Adrenal gland (tissue), 19 donors: ENCODE measurements at regions of chr7 and their contacts with region 1.

Region 1: GRCh38 chr7:30564243-30564892 is 30.3 kb upstream of the GARS1 start:
- DNase-seq: peak; percentile 78 to 95 (median 84)
- H3K4me3 ChIP-seq: no peak overlapping the region
- H3K27ac ChIP-seq: no peak overlapping the region
- H3K4me1 ChIP-seq: peaks cover 0 to 12% of the 10 kb centered on the region in 2 donors
- H3K27me3 ChIP-seq: no peaks in the 10 kb centered on the region
- CTCF ChIP-seq: peak; percentile 73 to 97 (median 90)
- POLR2A ChIP-seq: no peak

Region 2: DNA sequence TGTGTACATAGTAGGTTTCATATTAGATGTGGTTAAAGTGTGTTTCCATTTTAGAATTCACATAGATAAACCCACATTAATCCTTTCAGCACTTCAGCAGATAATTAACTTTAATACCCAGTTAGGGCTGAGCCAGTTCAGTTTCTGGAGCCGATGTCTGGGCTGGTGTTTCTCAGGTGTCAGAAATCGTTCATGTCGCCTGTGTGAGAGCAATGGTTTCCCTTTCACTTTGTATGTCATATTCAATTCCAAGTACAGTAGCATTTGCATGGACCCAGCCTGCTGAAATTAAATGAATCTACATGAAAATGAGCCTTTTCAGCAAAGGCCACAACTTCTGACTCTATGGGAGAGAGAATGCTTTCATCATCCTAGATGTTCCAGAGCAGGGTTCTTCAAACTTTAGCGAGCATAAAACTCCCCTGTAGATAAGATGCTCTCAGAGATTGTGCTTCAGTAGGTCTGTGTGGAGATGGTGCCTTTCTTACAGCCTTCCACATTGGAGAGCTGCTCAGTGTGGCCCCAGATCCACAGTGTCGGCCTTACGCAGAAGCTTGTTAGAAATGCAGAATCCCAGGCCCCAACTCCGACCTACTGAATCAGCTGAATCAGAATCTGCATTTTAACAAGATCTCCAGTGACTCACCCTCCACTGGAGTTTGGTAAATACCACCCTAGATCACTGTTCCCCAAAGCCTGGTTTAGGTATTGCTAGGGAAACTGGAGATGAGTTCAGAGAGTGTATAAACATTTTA is 738.4 kb before region 1 on chr7:
- intact Hi-C with region 1: no loop called
- DNase-seq: no peak
- H3K4me3 ChIP-seq: no peak overlapping the region
- H3K27ac ChIP-seq: no peak overlapping the region
- H3K4me1 ChIP-seq: no peaks in the 10 kb centered on the region
- H3K27me3 ChIP-seq: no peaks in the 10 kb centered on the region
- CTCF ChIP-seq: no peak
- POLR2A ChIP-seq: no peak

Region 3: GRCh38 chr7:30276203-30276900 is 288.0 kb before region 1 on chr7:
- intact Hi-C with region 1: loop called in 1 of 2 experiments (anchors 10 kb)
- DNase-seq: peak; percentile 40 to 69 (median 49)
- H3K4me3 ChIP-seq: no peak overlapping the region
- H3K27ac ChIP-seq: no peak overlapping the region
- H3K4me1 ChIP-seq: no peaks in the 10 kb centered on the region
- H3K27me3 ChIP-seq: no peaks in the 10 kb centered on the region
- CTCF ChIP-seq: peak; percentile 29 to 70 (median 60)
- POLR2A ChIP-seq: no peak

Region 4: GRCh38 chr7:30504347-30505173 is 59.8 kb before region 1 on chr7 and contains the start of gene GGCT:
- intact Hi-C with region 1: loop called in 1 of 2 experiments (anchors 5 kb)
- DNase-seq: peak; percentile 98 to 100 (median 99)
- H3K4me3 ChIP-seq: peak within 1 kb of the TSS; percentile 94 to 99 (median 96)
- H3K27ac ChIP-seq: peak within 1 kb of the TSS; percentile 55 to 90 (median 70)
- H3K4me1 ChIP-seq: peaks cover 0 to 36% of the 10 kb centered on the region in 2 donors
- H3K27me3 ChIP-seq: no peaks in the 10 kb centered on the region
- CTCF ChIP-seq: no peak
- POLR2A ChIP-seq: peak; percentile 38 to 76
- total RNA-seq, gene GGCT: 18.6 to 62.6 (median 34.8) TPM

Region 5: DNA sequence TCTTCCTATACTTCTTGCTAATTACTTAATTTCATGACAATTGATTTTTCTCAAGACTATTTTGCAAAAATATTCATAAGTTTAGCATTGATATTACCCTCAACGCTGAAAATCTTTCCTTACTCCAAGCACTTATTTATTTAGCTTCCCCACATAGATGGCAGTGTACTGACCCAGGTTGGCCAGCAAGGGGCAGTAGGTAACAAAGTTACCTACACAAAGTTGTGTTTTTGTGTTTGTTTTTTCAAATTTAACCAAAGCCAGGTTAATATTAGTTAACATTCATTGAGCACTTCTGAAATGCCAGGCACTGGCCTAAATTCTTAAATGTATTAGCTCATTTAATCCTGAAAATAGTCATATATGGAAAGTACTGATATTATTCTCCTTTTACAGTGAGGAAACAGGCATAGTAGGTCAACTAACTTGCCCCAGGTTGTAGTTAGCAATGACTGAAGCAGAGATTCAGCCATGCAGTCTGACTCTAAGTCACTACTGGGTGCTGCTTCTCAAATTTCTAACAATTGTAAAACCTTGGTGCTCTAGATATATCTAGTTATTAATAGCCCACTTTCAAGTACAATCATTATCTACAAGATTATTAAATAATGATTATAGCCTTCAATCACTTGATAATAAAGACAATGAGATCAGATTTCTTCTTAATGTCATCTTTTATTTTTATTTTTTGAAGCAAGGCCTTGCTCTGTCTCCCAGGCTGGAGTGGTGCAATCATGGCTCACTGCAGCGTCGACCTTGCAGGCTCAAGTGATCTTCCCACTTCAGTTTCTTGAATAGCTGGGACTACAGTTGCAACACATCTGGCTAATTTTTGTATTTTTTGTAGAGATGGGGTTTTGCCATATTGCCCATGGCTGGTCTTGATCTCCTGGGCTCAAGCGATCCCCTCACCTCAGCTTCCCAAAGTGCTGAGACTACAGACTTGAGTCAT is 54.0 kb before region 1 on chr7:
- intact Hi-C with region 1: loop called (anchors 5 to 10 kb)
- DNase-seq: peak in 6 of 7 donors; percentile 45 to 75 (median 66)
- H3K4me3 ChIP-seq: no peak overlapping the region
- H3K27ac ChIP-seq: peak overlapping the region in 2 of 5 donors; percentile 20 to 32
- H3K4me1 ChIP-seq: peaks cover 0 to 31% of the 10 kb centered on the region in 2 donors
- H3K27me3 ChIP-seq: no peaks in the 10 kb centered on the region
- CTCF ChIP-seq: peak; percentile 72 to 83 (median 78)
- POLR2A ChIP-seq: no peak